PC-9 (cell line): ENCODE measurements at regions of chr5 and their contacts with region 1.

Region 1: GRCh38 chr5:16863469-16863946 is 72.6 kb downstream of the MYO10 start:
- DNase-seq: no peak
- H3K4me3 ChIP-seq: no peak overlapping the region
- H3K27ac ChIP-seq: no peak overlapping the region
- H3K4me1 ChIP-seq: no peaks in the 10 kb centered on the region
- H3K27me3 ChIP-seq: no peaks in the 10 kb centered on the region
- CTCF ChIP-seq: no peak

Region 2: GRCh38 chr5:16713386-16713928 is 150.1 kb before region 1 on chr5:
- CTCF ChIA-PET with region 1: no interaction called
- POLR2A ChIA-PET with region 1: interaction called, 14 read pairs
- intact Hi-C with region 1: no loop called
- DNase-seq: no peak
- H3K4me3 ChIP-seq: no peak overlapping the region
- H3K27ac ChIP-seq: no peak overlapping the region
- H3K4me1 ChIP-seq: no peaks in the 10 kb centered on the region
- H3K27me3 ChIP-seq: no peaks in the 10 kb centered on the region
- CTCF ChIP-seq: no peak